ENCODE measurements at regions of chr2 and their contacts with region 1.

Region 1: DNA sequence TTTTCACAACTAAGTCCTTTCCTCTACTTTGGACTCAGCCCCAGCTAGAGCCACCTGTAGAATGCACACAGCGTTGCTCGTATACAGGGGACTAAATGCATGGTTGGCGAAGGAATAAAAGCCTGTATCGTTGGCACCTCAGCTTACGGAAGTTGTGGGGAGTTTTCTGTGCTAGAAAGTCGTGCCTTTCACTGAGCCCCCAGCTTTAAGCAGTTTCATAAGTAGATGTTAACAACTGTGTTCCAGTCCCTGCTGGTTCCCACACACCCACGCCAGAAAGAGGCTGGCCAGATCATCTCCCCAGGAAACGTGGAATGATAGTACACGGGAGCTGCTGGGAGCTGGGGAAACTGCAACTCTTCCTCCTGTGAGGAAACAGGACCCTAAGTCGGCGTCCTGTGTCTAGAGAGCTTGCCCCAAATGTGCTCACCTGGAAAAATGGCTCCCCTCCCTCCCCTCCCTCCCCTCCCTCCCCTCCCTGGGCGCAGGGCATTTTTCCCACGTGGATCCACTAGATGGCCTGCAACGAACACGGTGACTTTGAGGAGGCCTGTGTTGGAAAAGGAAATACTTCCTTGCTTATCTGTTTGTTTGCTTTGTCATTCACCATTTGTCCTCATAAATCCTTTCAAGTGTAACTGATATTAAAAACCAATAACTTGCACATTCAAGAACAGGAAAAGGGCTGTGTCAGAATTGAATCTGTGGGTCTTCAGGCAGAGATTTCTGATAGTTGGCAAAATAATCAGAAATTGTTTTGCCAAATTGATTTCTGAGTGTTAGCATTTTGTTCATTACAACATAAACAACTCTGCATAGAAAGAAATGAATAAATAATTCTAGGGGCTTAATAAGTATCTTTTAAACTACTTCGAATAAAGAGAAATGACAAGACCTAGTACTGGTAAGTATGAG is 43.9 kb upstream of the RFX8 start:
- DNase-seq: peak; percentile 94
- ATAC-seq: peak; percentile 43
- H3K4me3 ChIP-seq: peak overlapping the region; percentile 46
- H3K27ac ChIP-seq: peak overlapping the region; percentile 100
- H3K4me1 ChIP-seq: peaks cover 53% of the 10 kb centered on the region
- H3K27me3 ChIP-seq: no peaks in the 10 kb centered on the region
- CTCF ChIP-seq: peak; percentile 67

Region 2: DNA sequence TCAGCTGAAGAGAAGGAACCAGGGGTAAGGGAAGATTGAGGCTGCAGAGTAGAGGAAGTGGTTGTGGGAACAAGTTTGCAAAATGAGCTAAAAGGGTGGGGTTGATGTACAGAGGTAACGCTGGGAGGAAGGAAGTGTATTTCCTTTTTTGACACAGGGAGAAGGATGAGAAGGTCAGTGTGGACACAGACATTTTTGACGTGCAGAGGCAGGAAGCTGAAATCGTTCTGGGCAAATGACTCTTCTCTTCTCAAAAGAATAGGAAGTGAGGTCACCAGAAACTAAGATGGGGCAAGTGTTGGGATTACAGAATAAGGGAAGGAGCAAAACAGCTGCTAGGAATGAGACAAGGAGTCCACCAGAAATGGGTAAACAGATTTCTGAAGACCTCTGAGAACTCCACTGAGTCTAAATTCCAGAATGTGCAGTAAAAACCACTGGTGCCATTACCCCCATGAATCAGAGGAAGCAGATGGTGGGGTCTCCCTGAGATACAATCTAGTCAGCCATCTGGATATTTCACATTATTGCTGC is 190.3 kb before region 1 on chr2:
- CTCF ChIA-PET with region 1: no interaction called
- POLR2A ChIA-PET with region 1: interaction called, 15 read pairs
- intact Hi-C with region 1: no loop called
- DNase-seq: peak; percentile 88
- ATAC-seq: peak; percentile 85
- H3K4me3 ChIP-seq: peak overlapping the region; percentile 61
- H3K27ac ChIP-seq: peak overlapping the region; percentile 97
- H3K4me1 ChIP-seq: peaks cover 39% of the 10 kb centered on the region
- H3K27me3 ChIP-seq: no peaks in the 10 kb centered on the region
- CTCF ChIP-seq: no peak

Region 3: GRCh38 chr2:101419096-101419663 is 99.7 kb before region 1 on chr2:
- CTCF ChIA-PET with region 1: interaction called, 7 read pairs
- POLR2A ChIA-PET with region 1: no interaction called
- intact Hi-C with region 1: loop called (anchors 1 kb)
- DNase-seq: peak; percentile 89
- ATAC-seq: peak; percentile 86
- H3K4me3 ChIP-seq: peak overlapping the region; percentile 48
- H3K27ac ChIP-seq: peak overlapping the region; percentile 85
- H3K4me1 ChIP-seq: peaks cover 14% of the 10 kb centered on the region
- H3K27me3 ChIP-seq: no peaks in the 10 kb centered on the region
- CTCF ChIP-seq: peak; percentile 87

Region 4: GRCh38 chr2:101500860-101501259 is 18.0 kb before region 1 on chr2:
- CTCF ChIA-PET with region 1: no interaction called
- POLR2A ChIA-PET with region 1: interaction called, 3 read pairs
- intact Hi-C with region 1: loop called (anchors 1 kb)
- DNase-seq: no peak
- ATAC-seq: no peak; the same call in 1 of the 2 replicates
- H3K4me3 ChIP-seq: no peak overlapping the region
- H3K27ac ChIP-seq: peak overlapping the region; percentile 61
- H3K4me1 ChIP-seq: peaks cover 23% of the 10 kb centered on the region
- H3K27me3 ChIP-seq: no peaks in the 10 kb centered on the region
- CTCF ChIP-seq: no peak

Region 5: DNA sequence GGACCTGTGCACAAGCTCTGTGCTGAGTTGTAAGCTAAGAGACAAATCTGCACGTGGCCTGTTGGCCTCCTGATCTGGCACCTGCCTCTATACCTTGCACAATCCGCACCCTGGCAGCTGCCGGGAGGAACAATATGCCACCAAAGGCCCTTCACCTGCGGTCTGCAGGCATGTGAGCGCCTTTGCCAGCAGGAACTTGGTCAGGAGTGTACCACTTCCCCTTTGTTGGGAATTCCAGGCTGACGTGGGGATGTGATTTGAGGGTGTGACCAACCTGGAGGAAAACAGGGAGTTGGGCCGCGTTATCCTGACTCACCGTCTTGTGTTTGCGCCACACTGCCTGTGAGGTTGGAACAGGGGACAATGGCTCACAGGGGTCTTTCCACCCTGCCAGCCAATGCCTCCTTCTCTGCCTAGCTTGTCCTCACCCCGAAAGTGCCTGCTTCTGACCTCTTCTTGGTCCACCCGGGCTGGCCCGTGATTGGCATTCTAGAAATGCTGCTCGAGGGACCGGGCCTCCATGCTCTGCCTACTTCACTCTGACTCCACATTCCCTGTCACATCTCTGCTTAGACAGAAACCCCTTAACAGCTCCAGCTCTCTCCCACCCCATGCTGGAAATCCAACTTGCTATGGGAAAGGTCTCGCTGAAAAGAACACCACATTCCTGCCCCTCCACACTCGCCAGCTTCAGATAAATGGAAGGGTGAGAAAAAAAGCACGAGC is 111.6 kb after region 1 on chr2:
- CTCF ChIA-PET with region 1: no interaction called
- POLR2A ChIA-PET with region 1: no interaction called
- intact Hi-C with region 1: no loop called
- DNase-seq: peak; percentile 95
- ATAC-seq: peak; percentile 97
- H3K4me3 ChIP-seq: no peak overlapping the region
- H3K27ac ChIP-seq: peak overlapping the region; percentile 86
- H3K4me1 ChIP-seq: peaks cover 16% of the 10 kb centered on the region
- H3K27me3 ChIP-seq: no peaks in the 10 kb centered on the region
- CTCF ChIP-seq: no peak

Region 6: GRCh38 chr2:101655702-101656422 is 137.0 kb after region 1 on chr2:
- CTCF ChIA-PET with region 1: no interaction called
- POLR2A ChIA-PET with region 1: no interaction called
- intact Hi-C with region 1: no loop called
- DNase-seq: no peak
- ATAC-seq: no peak
- H3K4me3 ChIP-seq: no peak overlapping the region
- H3K27ac ChIP-seq: no peak overlapping the region
- H3K4me1 ChIP-seq: no peaks in the 10 kb centered on the region
- H3K27me3 ChIP-seq: no peaks in the 10 kb centered on the region
- CTCF ChIP-seq: no peak

Region 7: GRCh38 chr2:101679037-101679726 is 160.3 kb after region 1 on chr2:
- CTCF ChIA-PET with region 1: no interaction called
- POLR2A ChIA-PET with region 1: no interaction called
- intact Hi-C with region 1: no loop called
- DNase-seq: peak; percentile 47
- ATAC-seq: peak; percentile 50; the same call in 1 of the 2 replicates
- H3K4me3 ChIP-seq: no peak overlapping the region
- H3K27ac ChIP-seq: no peak overlapping the region
- H3K4me1 ChIP-seq: no peaks in the 10 kb centered on the region
- H3K27me3 ChIP-seq: no peaks in the 10 kb centered on the region
- CTCF ChIP-seq: no peak

Region 8: GRCh38 chr2:101759162-101759561 is 240.3 kb after region 1 on chr2:
- CTCF ChIA-PET with region 1: no interaction called
- POLR2A ChIA-PET with region 1: interaction called, 9 read pairs
- intact Hi-C with region 1: loop called (anchors 5 kb)
- DNase-seq: peak; percentile 92
- ATAC-seq: peak; percentile 65
- H3K4me3 ChIP-seq: 0 out of 2 replicates have a peak overlapping the region, but pooled peaks have one; percentile 5
- H3K27ac ChIP-seq: peak overlapping the region; percentile 66
- H3K4me1 ChIP-seq: peaks cover 57% of the 10 kb centered on the region
- H3K27me3 ChIP-seq: no peaks in the 10 kb centered on the region
- CTCF ChIP-seq: no peak

Region 9: DNA sequence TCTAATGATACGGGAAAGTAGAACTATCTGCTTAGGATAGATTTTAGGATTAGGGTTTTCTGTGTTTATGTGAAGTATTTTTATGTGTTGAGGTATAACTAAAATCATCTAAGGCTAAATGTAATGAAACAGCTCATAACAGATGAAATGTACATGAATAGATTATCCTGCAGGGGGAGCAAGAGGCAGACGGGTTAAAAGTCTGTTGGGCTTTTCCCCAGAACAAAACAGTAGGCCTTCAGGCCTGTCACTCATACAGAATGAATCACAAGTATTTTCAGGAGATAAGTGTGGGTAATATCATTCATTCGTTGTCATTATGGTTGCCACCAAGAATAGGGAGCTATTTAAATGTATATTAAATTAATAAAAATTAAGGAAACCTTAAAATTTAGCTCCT is 365.0 kb after region 1 on chr2:
- CTCF ChIA-PET with region 1: no interaction called
- POLR2A ChIA-PET with region 1: no interaction called
- intact Hi-C with region 1: loop called (anchors 5 kb)
- DNase-seq: peak; percentile 80
- ATAC-seq: peak; percentile 67
- H3K4me3 ChIP-seq: no peak overlapping the region
- H3K27ac ChIP-seq: no peak overlapping the region
- H3K4me1 ChIP-seq: peaks cover 13% of the 10 kb centered on the region
- H3K27me3 ChIP-seq: no peaks in the 10 kb centered on the region
- CTCF ChIP-seq: peak; percentile 81